ENCODE measurements at regions of chr19 and their contacts with region 1.

Region 1: DNA sequence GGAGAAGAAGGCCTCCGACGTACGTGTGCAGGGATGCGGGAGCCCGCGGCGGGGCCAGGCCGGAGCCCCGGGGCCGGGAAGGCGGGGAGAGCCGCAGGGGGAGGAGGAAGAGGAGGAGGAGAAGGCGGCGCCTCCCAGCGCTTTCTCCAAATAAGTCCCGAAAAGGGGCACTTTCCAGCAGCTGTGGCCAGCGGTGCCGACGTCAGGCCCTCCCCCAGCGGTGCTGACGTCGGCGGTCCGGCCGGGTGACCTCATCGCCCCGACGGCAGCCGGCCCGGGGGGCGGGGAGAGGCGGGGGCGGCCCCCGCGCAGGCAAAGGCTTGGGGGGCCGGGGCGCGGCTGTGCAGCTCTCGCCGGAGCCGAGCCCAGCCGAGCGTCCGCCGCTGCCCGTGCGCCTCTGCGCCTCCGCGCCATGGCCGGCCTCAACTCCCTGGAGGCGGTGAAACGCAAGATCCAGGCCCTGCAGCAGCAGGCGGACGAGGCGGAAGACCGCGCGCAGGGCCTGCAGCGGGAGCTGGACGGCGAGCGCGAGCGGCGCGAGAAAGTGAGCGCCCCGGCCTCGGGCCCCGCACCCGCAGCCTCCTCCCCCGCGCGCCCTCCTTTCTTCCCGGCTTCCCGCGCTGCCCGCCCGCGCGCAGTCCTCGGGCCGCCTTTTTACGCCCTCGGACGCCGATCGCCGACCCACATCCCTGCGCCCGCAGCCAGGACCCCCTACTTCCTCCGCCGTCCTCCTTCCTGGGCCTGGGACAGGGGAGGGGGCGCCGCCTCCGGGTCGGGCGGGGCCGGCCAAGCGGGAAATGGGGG is at the start of gene TPM4:
- DNase-seq: peak; percentile 85
- H3K4me3 Mint-ChIP-seq: peak within 1 kb of the TSS; percentile 95
- H3K27ac Mint-ChIP-seq: peak within 1 kb of the TSS; percentile 96
- H3K4me1 Mint-ChIP-seq: peaks cover 50% of the 10 kb centered on the region
- H3K27me3 Mint-ChIP-seq: no peaks in the 10 kb centered on the region
- total RNA-seq, gene TPM4: 507 and 520 TPM in 2 replicates

Region 2: DNA sequence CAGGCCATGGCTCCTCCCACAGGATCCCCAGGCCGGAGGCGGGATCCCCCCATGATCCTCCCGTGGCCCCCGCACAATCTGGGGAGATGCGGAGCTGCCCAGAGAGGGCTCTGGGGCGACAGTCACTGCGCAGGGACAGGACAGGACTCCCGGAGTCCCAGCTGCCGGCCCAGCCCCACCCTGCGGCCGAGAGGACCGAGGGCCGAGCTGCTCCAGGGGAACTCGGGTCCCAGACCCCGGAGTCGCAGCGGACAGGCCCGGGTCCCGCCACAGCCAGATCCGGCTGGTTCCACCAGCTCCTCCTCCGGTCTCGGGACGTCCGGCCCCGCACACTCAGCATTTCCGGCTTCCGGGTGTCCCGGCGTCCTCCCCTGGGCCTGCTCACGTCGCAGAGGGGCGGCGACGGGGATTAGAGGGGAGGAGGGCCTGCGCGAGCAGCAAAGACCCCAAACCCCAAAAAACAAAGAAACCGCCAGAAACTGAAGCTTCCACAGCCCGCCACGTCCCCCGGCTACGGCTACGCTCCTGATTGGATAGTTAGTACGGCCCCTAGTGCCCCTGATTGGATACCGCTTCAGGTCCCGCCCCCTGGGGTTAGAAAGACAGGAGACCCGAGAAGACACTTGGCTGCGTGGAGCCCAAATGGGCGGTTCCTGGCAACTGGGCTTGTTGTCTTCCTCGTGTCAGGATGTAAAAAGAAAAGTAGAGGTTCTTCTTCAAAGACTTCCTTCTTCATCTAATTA is 239.6 kb before region 1 on chr19:
- intact Hi-C with region 1: loop called (anchors 5 kb)
- DNase-seq: peak; percentile 97
- H3K4me3 Mint-ChIP-seq: peak overlapping the region; percentile 94
- H3K27ac Mint-ChIP-seq: peak overlapping the region; percentile 99
- H3K4me1 Mint-ChIP-seq: peaks cover 26% of the 10 kb centered on the region
- H3K27me3 Mint-ChIP-seq: no peaks in the 10 kb centered on the region

Region 3: DNA sequence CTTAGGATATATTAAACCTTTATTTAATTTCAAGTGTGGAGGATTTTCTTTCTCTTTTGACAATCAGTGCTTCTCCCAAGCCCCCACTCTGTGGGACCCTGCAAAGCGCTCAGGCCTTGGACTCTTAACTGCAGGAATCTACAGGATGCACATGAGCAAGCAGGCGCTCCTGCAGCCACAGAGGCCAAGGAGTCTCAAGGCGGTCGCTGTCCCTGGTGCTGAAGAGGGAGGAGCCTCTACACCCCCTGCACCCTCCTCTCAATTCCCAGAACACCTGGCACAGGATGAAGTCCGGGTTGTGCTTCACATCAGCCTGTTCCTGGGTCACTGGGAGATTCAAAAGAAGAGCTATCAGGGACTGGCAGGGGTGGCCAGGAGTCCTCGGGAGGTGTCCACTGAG is 114.0 kb before region 1 on chr19:
- intact Hi-C with region 1: no loop called
- DNase-seq: no peak
- H3K4me3 Mint-ChIP-seq: no peak overlapping the region
- H3K27ac Mint-ChIP-seq: no peak overlapping the region
- H3K4me1 Mint-ChIP-seq: peaks cover 2% of the 10 kb centered on the region
- H3K27me3 Mint-ChIP-seq: peaks cover 4% of the 10 kb centered on the region

Region 4: GRCh38 chr19:16111160-16111908 is 35.0 kb after region 1 on chr19 and contains the start of gene RAB8A:
- intact Hi-C with region 1: loop called (anchors 1 kb)
- DNase-seq: peak; percentile 99
- H3K4me3 Mint-ChIP-seq: peak within 1 kb of the TSS; percentile 99
- H3K27ac Mint-ChIP-seq: peak within 1 kb of the TSS; percentile 95
- H3K4me1 Mint-ChIP-seq: peaks cover 29% of the 10 kb centered on the region
- H3K27me3 Mint-ChIP-seq: no peaks in the 10 kb centered on the region
- total RNA-seq, gene RAB8A: 256 and 261 TPM in 2 replicates

Region 5: GRCh38 chr19:16160943-16161560 is 84.7 kb after region 1 on chr19:
- intact Hi-C with region 1: loop called (anchors 2 kb)
- DNase-seq: no peak
- H3K4me3 Mint-ChIP-seq: peak overlapping the region; percentile 22
- H3K27ac Mint-ChIP-seq: peak overlapping the region; percentile 80
- H3K4me1 Mint-ChIP-seq: peaks cover 18% of the 10 kb centered on the region
- H3K27me3 Mint-ChIP-seq: no peaks in the 10 kb centered on the region

Measured in activated T-helper 2 cell treated with anti-CD3 and anti-CD28 coated beads, Interferon-gamma antibody, Interleukin-2, Interleukin-4, amounts not matched to agents 10 μg/mL and 5 μg/mL and 100 μg/mL, durations not matched to agents 14 hours and 24 hours and 36 hours (primary cell).